GM12878 (cell line): ENCODE measurements at regions of chr17 and their contacts with region 1.

Region 1: GRCh38 chr17:59762513-59763374 is 55.3 kb downstream of the VMP1 start:
- DNase-seq: no peak
- ATAC-seq: peak; percentile 85
- H3K4me3 ChIP-seq: no peak overlapping the region
- H3K27ac ChIP-seq: peak overlapping the region; percentile 47
- H3K4me1 ChIP-seq: peaks cover 4% of the 10 kb centered on the region; the same call in 1 of the 2 replicates
- H3K27me3 ChIP-seq: no peaks in the 10 kb centered on the region
- CTCF ChIP-seq: no peak
- EP300 ChIP-seq: 0 out of 4 replicates have a peak, but pooled peaks of 1 of the 2 experiments have one; percentile 29
- POLR2A ChIP-seq: no peak
- RAD21 ChIP-seq: no peak

Region 2: DNA sequence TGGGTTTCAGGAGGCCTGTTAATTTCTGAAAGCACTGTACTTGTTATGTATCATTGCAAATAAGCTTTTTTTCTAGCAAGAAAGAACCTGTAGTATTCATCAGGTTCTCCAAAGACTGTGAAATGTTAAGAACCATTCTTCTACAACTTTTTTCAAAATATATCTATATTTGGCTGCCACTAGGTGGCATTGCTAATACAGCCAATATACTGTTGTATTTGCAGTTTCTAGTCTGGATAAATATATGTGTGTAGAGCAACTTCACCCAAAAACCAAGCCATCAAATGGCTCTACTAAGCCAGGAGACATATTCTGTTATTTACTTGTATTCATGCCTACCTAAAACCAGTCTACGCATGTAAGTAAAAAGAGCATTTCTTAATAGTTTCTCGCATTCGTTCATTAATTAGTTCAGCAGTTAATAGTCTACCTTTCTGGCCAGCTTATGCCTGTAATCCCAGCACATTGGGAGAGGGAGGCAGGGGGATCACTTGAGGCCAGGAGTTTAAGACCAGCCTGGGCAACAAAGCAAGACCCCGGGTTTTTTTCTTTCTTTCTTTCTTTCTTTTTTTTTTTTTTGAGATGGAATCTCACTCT is 15.8 kb before region 1 on chr17:
- CTCF ChIA-PET with region 1: interaction called, 42 read pairs
- POLR2A ChIA-PET with region 1: interaction called, 3 read pairs
- RAD21 ChIA-PET with region 1: interaction called, 49 read pairs
- SMC1A ChIA-PET with region 1: interaction called, 69 read pairs
- in situ Hi-C with region 1: no loop called
- intact Hi-C with region 1: no loop called
- DNase-seq: no peak
- ATAC-seq: peak; percentile 83
- H3K4me3 ChIP-seq: no peak overlapping the region
- H3K27ac ChIP-seq: no peak overlapping the region
- H3K4me1 ChIP-seq: peaks cover 4% of the 10 kb centered on the region
- H3K27me3 ChIP-seq: no peaks in the 10 kb centered on the region
- CTCF ChIP-seq: peak; percentile 47 to 65 (median 61)
- EP300 ChIP-seq: no peak
- POLR2A ChIP-seq: no peak
- RAD21 ChIP-seq: peak; percentile 82

Region 3: GRCh38 chr17:59829217-59830006 is 66.7 kb after region 1 on chr17:
- CTCF ChIA-PET with region 1: interaction called, 12 read pairs
- POLR2A ChIA-PET with region 1: interaction called, 19 read pairs
- RAD21 ChIA-PET with region 1: interaction called, 31 read pairs
- SMC1A ChIA-PET with region 1: interaction called, 74 read pairs
- in situ Hi-C with region 1: no loop called
- intact Hi-C with region 1: no loop called
- DNase-seq: peak; percentile 100
- ATAC-seq: peak; percentile 71
- H3K4me3 ChIP-seq: peak overlapping the region; percentile 65
- H3K27ac ChIP-seq: peak overlapping the region; percentile 98
- H3K4me1 ChIP-seq: peaks cover 88% of the 10 kb centered on the region
- H3K27me3 ChIP-seq: no peaks in the 10 kb centered on the region
- CTCF ChIP-seq: no peak
- EP300 ChIP-seq: peak; percentile 97 to 99
- POLR2A ChIP-seq: peak; percentile 42; the same call in 1 of the 2 replicates
- RAD21 ChIP-seq: peak; percentile 18; the same call in 1 of the 2 replicates

Region 4: DNA sequence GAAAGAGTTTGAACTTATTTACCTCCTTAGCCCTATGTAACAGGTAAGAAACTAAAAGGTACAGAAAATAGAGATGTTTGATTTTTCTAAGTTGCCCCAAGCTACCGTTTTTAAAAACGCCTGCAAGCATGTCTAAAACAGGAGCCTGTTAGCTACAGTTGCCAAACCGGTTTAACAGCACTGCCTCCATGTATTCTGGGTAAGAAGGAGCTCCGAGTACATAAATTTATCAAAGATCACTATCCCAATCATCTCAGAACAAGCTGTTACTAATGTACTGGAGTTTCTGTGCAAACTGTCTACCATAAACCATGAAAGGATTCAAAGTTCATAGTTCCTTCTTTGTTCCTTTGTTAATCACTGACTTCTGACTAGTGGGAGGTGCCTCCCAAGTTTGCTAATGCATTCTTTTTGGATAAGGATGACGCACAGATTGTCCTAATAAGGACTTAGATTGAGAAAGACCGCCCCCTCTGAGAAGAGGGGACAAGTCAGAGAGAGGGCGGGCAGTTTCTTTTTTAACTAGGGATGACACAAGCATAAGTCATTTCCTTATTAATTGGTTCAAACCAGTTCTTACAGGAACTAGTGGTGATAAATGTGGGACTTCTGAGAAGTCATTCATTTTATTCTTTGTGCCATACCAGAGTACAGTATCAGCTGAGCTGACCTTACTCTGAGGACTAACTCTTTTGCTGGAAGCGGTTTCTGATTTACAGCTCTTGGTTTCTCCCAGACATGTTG is 74.7 kb after region 1 on chr17:
- CTCF ChIA-PET with region 1: interaction called, 8 read pairs
- POLR2A ChIA-PET with region 1: interaction called, 10 read pairs
- RAD21 ChIA-PET with region 1: interaction called, 30 read pairs
- SMC1A ChIA-PET with region 1: interaction called, 74 read pairs
- in situ Hi-C with region 1: no loop called
- intact Hi-C with region 1: no loop called
- DNase-seq: peak; percentile 97
- ATAC-seq: peak; percentile 70
- H3K4me3 ChIP-seq: peak overlapping the region; percentile 91
- H3K27ac ChIP-seq: peak overlapping the region; percentile 97
- H3K4me1 ChIP-seq: peaks cover 35% of the 10 kb centered on the region
- H3K27me3 ChIP-seq: no peaks in the 10 kb centered on the region
- CTCF ChIP-seq: no peak
- EP300 ChIP-seq: peak in 1 of 2 experiments; percentile 70; a peak in 2 of 4 replicates
- POLR2A ChIP-seq: peak; percentile 94
- RAD21 ChIP-seq: no peak

Region 5: DNA sequence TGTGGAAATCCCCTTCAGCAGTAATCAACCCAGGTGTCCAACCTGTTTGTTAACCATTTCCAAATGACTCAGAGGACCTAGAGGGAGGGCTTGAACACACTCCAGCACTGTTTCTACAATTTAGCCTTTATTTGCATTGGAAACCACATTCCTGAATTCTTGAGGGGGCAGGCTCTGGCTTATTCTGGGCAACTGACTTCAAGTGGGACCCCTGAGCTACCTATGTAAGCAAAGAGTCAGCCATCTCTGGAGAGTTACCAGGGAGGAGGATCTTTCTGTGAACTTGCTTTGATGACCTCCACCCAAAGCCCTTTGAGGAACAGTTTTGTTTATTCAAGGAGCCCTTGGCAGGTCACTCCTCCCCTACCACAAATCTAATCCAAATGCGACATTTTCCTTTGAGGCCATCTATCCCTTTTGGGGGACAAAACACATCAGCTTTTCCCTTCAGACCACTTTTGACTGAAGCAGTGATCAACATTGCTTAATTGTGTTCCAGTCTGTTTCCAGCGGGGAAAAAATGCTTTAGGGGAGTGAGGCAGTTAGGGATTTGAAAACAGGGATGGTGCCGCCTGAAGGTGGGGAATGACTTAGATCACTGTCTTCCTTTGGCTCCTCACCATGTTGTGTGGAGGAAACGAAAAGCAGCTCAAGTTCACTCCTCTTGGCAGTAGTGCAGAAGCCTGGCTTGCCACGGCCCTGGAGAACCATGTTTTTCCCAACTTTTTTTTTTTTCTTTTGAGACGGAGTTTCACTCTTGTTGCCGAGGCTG is 83.8 kb after region 1 on chr17:
- CTCF ChIA-PET with region 1: interaction called, 5 read pairs
- POLR2A ChIA-PET with region 1: interaction called, 10 read pairs
- RAD21 ChIA-PET with region 1: interaction called, 7 read pairs
- SMC1A ChIA-PET with region 1: interaction called, 32 read pairs
- in situ Hi-C with region 1: no loop called
- intact Hi-C with region 1: no loop called
- DNase-seq: peak; percentile 91
- ATAC-seq: peak; percentile 54
- H3K4me3 ChIP-seq: peak overlapping the region; percentile 28; the same call in 1 of the 2 replicates
- H3K27ac ChIP-seq: peak overlapping the region; percentile 68
- H3K4me1 ChIP-seq: peaks cover 55% of the 10 kb centered on the region
- H3K27me3 ChIP-seq: no peaks in the 10 kb centered on the region
- CTCF ChIP-seq: no peak
- EP300 ChIP-seq: peak; percentile 65 to 76
- POLR2A ChIP-seq: no peak
- RAD21 ChIP-seq: no peak